ENCODE measurements at regions of chr2 and their contacts with region 1.

Region 1: DNA sequence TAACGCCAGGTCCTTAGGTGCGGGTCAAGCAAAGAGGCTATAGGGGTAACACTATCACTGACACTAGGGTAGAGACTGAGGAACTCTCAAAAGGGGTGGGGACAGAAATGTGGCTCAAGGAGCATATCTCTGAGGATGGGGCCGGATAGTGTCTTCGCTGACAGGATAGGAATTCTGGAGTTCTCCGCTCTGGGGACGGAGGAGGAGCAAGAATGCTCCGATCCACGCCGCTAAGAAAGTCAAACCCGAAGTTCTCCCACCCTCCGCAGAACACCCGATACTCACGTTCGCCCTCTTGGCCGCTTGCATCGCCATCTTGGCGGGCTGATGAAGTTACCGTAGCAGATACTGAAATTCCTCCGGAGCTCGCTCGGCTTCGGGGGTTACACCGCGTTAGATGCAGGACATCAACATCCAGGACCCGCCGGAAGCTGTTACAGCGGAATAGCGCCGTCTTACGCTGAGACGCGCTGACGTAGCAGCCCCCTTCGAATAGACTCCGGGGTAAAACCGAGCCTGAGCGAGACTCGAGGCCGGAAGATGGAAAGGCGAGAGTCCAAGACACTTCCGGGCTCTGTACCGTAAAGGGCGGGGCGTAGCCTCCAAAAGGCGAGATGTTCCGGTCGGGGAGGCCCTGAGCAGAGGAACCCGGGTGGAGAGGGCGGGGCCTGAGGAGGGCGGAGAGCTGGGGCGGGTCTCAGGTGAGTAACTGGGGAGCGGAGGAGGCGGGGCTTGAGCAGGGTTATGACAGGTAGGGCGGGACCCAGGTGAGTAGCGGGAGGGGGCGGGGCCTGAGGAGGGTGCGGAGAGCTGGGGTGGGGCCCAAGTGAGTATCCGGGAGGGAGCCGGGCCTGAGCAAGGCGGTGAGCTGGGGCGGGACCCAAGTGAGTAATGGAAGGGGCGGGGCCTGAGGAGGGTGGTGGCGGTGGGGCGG is at the start of gene SF3B6:
- DNase-seq: peak; percentile 98
- ATAC-seq: peak; percentile 97
- total RNA-seq, gene SF3B6: 62.5 TPM

Region 2: GRCh38 chr2:22784566-22784965 is 1291.6 kb before region 1 on chr2:
- intact Hi-C with region 1: loop called (anchors 10 kb)
- DNase-seq: no peak
- ATAC-seq: no peak

Region 3: GRCh38 chr2:24509425-24509824 is 433.2 kb after region 1 on chr2:
- intact Hi-C with region 1: no loop called
- DNase-seq: no peak
- ATAC-seq: no peak

Measured in sciatic nerve (tissue), 2 donors.